Upper lobe of right lung (tissue), 1 donor: ENCODE measurements at regions of chr18 and their contacts with region 1.

Region 1: GRCh38 chr18:3760741-3761140 is 310.8 kb downstream of the TGIF1 start:
- DNase-seq: no peak
- ATAC-seq: peak; percentile 24
- H3K4me3 ChIP-seq: no peak overlapping the region
- H3K27ac ChIP-seq: no peak overlapping the region
- H3K4me1 ChIP-seq: no peaks in the 10 kb centered on the region
- H3K27me3 ChIP-seq: no peaks in the 10 kb centered on the region
- CTCF ChIP-seq: no peak

Region 2: DNA sequence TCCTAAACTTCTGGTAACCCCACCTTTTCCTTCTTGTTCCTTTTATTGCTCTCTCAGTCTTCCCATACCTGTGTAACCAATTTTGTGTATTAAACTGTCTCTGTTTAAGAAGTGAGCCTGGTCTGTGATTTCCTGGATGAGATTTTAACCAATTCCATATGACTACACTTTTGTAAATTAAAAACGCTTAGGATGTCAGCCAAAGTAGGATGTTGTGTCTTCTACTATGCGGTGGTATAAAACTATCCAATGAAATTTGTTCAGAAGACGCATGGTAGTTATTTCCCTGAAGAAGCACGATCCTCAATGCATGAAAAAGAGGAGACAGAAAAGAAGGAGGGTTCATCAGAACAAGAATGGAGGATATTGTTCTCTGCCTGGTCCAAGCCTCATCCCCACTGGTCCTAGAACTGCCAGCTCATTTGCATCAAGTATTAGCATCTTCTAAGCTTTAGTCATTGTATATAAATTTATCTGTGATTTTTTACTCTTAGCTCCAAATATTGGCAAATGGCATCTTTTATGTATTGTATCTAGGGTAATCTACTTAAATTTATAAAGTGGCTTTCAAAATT is 183.4 kb before region 1 on chr18:
- intact Hi-C with region 1: no loop called
- DNase-seq: no peak
- ATAC-seq: no peak
- H3K4me3 ChIP-seq: no peak overlapping the region
- H3K27ac ChIP-seq: no peak overlapping the region
- H3K4me1 ChIP-seq: no peaks in the 10 kb centered on the region
- H3K27me3 ChIP-seq: no peaks in the 10 kb centered on the region
- CTCF ChIP-seq: no peak

Region 3: DNA sequence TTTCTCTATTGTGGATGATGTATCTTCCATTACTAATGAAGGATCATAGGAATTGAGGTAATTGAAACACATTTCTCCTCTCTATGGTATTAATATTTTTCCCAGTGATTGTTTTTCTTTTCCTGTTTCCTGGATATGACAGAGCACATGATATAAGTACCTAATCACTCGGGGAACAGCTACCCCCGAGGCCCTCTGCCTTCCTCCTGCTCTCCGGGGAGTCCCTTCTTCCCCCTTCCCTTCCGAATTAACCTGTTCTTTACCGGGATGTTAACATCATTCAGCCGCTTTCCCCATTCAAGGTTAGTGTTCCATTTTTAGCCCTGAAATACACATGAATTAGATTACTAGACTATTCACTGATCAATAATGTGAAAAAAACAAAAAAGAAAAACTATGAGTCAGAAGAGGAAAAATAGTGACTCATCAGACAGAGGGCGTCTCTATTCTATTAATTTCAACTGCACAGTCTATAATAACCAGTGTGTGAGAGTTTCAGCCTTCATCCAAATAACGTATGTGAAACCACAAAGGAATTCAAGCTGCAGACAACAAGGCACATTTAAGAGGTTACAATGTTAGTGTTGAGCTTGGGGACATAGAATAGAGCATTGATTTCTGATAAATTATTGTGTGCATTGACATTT is 243.6 kb after region 1 on chr18:
- intact Hi-C with region 1: loop called (anchors 10 kb)
- DNase-seq: no peak
- ATAC-seq: no peak
- H3K4me3 ChIP-seq: no peak overlapping the region
- H3K27ac ChIP-seq: no peak overlapping the region
- H3K4me1 ChIP-seq: no peaks in the 10 kb centered on the region
- H3K27me3 ChIP-seq: no peaks in the 10 kb centered on the region
- CTCF ChIP-seq: no peak